ENCODE measurements at regions of chr6 and their contacts with region 1.

Region 1: DNA sequence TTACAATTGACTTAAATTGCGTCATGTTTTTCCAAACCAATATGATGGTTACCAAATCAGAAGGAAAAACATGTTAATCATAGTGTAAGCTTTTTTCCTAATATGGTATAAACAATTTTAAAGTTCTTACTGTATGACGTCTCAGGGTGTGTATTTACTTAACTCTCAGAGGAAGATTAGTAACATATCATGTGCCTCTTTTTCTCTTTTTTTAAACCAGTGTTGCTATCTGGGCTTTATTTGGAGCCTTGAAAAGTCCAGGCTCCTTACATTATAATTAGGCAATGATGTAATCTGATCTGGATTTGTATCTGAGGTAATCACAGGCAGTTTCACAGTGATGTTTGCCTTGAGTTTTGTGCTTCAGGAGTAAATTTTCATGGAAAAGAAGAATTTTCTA is 20.4 kb upstream of the RAB23 start:
- DNase-seq: peak in 1 of 2 experiments; percentile 71
- H3K4me3 ChIP-seq: no peak overlapping the region
- H3K27ac ChIP-seq: peak overlapping the region; percentile 51; the same call in 1 of the 2 replicates
- H3K4me1 ChIP-seq: peaks cover 12% of the 10 kb centered on the region
- H3K27me3 ChIP-seq: no peaks in the 10 kb centered on the region
- CTCF ChIP-seq: no peak

Region 2: GRCh38 chr6:55841341-55841740 is 1401.2 kb before region 1 on chr6:
- CTCF ChIA-PET with region 1: no interaction called
- POLR2A ChIA-PET with region 1: no interaction called
- intact Hi-C with region 1: no loop called
- DNase-seq: peak; percentile 10 to 51
- H3K4me3 ChIP-seq: no peak overlapping the region
- H3K27ac ChIP-seq: no peak overlapping the region
- H3K4me1 ChIP-seq: peaks cover 5% of the 10 kb centered on the region; the same call in 1 of the 2 replicates
- H3K27me3 ChIP-seq: no peaks in the 10 kb centered on the region
- CTCF ChIP-seq: no peak

Region 3: GRCh38 chr6:56570413-56571359 is 671.8 kb before region 1 on chr6:
- CTCF ChIA-PET with region 1: interaction called, 19 read pairs
- POLR2A ChIA-PET with region 1: no interaction called
- intact Hi-C with region 1: no loop called
- DNase-seq: no peak
- H3K4me3 ChIP-seq: no peak overlapping the region
- H3K27ac ChIP-seq: no peak overlapping the region
- H3K4me1 ChIP-seq: no peaks in the 10 kb centered on the region
- H3K27me3 ChIP-seq: no peaks in the 10 kb centered on the region
- CTCF ChIP-seq: peak; percentile 71

Region 4: GRCh38 chr6:57288115-57288514 is 45.6 kb after region 1 on chr6:
- CTCF ChIA-PET with region 1: no interaction called
- POLR2A ChIA-PET with region 1: interaction called, 11 read pairs
- intact Hi-C with region 1: no loop called
- DNase-seq: peak; percentile 67 to 72
- H3K4me3 ChIP-seq: no peak overlapping the region
- H3K27ac ChIP-seq: no peak overlapping the region
- H3K4me1 ChIP-seq: peaks cover 5% of the 10 kb centered on the region; the same call in 1 of the 2 replicates
- H3K27me3 ChIP-seq: no peaks in the 10 kb centered on the region
- CTCF ChIP-seq: no peak